Naive thymus-derived CD4-positive, alpha-beta T cell (primary cell): ENCODE measurements at regions of chr19 and their contacts with region 1.

Region 1: DNA sequence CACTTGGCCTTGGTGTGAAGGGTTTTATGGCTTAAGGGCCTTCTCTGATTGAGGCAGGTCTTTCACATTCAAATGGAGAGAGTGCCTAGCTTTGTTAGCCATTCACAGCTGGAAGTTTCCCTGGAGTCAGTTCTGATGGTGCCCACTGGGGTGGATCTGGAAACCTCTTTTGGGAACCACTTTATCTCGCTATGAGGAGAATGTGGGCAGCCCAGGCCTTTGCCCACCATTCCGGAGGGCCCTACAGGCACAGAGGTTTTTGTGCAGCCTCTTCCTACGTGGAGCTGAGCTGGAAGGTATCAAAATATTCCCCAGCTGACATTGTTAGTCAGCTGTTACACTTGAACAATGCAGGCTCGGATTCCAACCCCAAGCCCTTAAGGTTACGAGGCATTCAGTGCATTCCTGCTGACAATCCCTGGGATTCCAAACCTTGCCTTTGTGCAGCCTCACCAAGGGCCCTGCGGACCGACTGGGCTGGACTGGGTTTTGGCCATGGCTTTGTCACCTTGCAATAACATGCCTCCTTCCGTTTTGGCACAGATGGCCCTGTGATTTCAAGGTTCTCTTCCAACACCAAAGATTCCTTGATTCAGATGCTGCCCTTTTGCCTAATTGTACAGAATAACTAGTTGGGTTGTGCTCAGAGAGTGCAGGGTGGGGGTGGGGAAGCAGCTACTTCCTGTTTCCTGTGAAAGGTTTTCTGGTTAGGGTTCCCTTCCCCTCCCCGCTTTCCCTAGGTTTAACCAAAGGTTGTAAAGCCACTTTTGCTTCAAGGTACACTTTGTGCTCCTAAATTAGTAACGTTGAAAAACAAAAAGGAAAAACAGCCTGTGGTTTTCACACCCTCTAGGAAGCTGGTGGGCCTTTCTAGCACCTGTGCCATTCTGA is 27.0 kb downstream of the SAE1 start:
- DNase-seq: peak in 7 of 9 donors; percentile 38 to 58 (median 48)
- ATAC-seq: peak; percentile 45
- H3K4me3 ChIP-seq: peak overlapping the region; percentile 55
- H3K4me3 Mint-ChIP-seq: peak overlapping the region; percentile 79 to 98 (median 84)
- H3K27ac ChIP-seq: peak overlapping the region; percentile 66
- H3K27ac Mint-ChIP-seq: peak overlapping the region; percentile 82 to 98 (median 97)
- H3K4me1 ChIP-seq: peaks cover 57 to 72% of the 10 kb centered on the region in 2 donors
- H3K4me1 Mint-ChIP-seq: peaks cover 35 to 82% (median 66%) of the 10 kb centered on the region in 7 donors
- H3K27me3 ChIP-seq: no peaks in the 10 kb centered on the region
- H3K27me3 Mint-ChIP-seq: no peaks in the 10 kb centered on the region

Region 2: GRCh38 chr19:47130591-47131227 is 27.0 kb before region 1 on chr19 and contains the start of gene SAE1:
- CTCF ChIA-PET with region 1: interaction called, 13 read pairs
- POLR2A ChIA-PET with region 1: interaction called, 7 read pairs
- intact Hi-C with region 1: no loop called
- DNase-seq: peak; percentile 84 to 97 (median 91)
- ATAC-seq: peak; percentile 94
- H3K4me3 ChIP-seq: peak within 1 kb of the TSS; percentile 98
- H3K4me3 Mint-ChIP-seq: peak within 1 kb of the TSS; percentile 92 to 100 (median 99)
- H3K27ac ChIP-seq: peak within 1 kb of the TSS; percentile 85
- H3K27ac Mint-ChIP-seq: peak within 1 kb of the TSS; percentile 87 to 97 (median 92)
- H3K4me1 ChIP-seq: peaks cover 11 to 25% of the 10 kb centered on the region in 2 donors
- H3K4me1 Mint-ChIP-seq: peaks cover 44 to 57% (median 52%) of the 10 kb centered on the region in 7 donors
- H3K27me3 ChIP-seq: no peaks in the 10 kb centered on the region
- H3K27me3 Mint-ChIP-seq: peaks cover 0 to 7% (median 0%) of the 10 kb centered on the region in 5 donors
- total RNA-seq, gene SAE1: 34.3 to 115 (median 46.4) TPM

Region 3: DNA sequence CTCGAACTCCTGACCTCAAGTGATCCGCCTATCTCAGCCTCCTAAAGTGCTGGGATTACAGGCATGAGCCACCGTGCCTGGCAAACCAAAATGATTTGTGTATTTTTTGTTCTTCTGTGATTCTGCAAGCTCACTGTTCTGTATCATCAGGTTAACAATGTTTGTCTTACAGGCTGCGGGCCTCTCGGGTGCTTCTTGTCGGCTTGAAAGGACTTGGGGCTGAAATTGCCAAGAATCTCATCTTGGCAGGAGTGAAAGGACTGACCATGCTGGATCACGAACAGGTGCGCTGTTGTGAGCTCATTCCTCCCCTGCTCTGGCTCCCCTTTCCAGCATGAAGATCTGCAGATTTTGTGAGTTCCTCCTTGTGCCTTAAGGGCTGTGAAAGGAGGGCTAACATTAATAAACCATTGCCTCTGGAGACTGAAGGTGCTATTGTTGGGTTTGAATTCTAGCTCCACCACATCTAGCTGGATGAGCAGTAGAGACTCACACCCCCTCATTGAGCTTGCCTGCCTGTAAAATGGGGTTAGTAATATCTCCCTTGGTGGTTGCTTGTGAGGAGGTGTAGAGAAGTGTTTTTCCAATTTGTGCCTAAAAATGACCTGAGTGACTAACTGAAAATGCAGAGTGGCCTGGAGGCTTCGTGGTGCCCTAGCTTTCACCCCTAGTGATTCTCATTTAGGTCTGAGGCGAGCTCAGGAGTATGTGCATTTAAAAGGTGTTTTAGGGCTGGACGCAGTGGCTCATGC is 14.2 kb before region 1 on chr19:
- CTCF ChIA-PET with region 1: interaction called, 19 read pairs
- POLR2A ChIA-PET with region 1: interaction called, 8 read pairs
- intact Hi-C with region 1: no loop called
- DNase-seq: no peak
- ATAC-seq: no peak
- H3K4me3 ChIP-seq: no peak overlapping the region
- H3K4me3 Mint-ChIP-seq: peak overlapping the region in 3 of 10 donors; percentile 9 to 45 (median 32)
- H3K27ac ChIP-seq: no peak overlapping the region
- H3K27ac Mint-ChIP-seq: peak overlapping the region in 4 of 9 donors; percentile 11 to 73 (median 42)
- H3K4me1 ChIP-seq: peaks cover 21 to 38% of the 10 kb centered on the region in 2 donors
- H3K4me1 Mint-ChIP-seq: peaks cover 29 to 75% (median 57%) of the 10 kb centered on the region in 7 donors
- H3K27me3 ChIP-seq: no peaks in the 10 kb centered on the region
- H3K27me3 Mint-ChIP-seq: no peaks in the 10 kb centered on the region

Region 4: DNA sequence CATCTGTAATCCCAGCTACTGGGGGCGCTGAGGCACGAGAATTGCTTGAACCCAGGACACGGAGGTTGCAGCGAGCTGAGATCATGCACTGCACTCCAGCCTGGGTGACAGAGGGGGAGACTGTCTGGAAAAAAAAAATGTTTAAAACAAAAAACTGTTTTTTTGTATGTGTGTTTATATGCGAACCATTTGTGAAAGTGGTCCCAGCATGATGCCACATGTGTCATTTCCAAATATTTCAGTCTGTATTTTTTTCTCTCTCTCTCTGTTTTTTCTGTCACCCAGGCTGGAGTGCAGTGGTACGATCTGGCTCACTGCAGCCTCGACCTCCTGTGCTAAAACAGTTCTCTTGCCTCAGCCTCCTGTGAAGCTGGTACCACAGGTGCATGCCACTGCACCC is 10.4 kb after region 1 on chr19:
- CTCF ChIA-PET with region 1: interaction called, 3 read pairs
- POLR2A ChIA-PET with region 1: interaction called, 14 read pairs
- intact Hi-C with region 1: no loop called
- DNase-seq: no peak
- ATAC-seq: no peak
- H3K4me3 ChIP-seq: no peak overlapping the region
- H3K4me3 Mint-ChIP-seq: no peak overlapping the region
- H3K27ac ChIP-seq: no peak overlapping the region
- H3K27ac Mint-ChIP-seq: peak overlapping the region in 4 of 9 donors; percentile 4 to 64 (median 35)
- H3K4me1 ChIP-seq: peaks cover 0 to 4% of the 10 kb centered on the region in 2 donors
- H3K4me1 Mint-ChIP-seq: peaks cover 7 to 64% (median 47%) of the 10 kb centered on the region in 7 donors
- H3K27me3 ChIP-seq: no peaks in the 10 kb centered on the region
- H3K27me3 Mint-ChIP-seq: no peaks in the 10 kb centered on the region

Region 5: DNA sequence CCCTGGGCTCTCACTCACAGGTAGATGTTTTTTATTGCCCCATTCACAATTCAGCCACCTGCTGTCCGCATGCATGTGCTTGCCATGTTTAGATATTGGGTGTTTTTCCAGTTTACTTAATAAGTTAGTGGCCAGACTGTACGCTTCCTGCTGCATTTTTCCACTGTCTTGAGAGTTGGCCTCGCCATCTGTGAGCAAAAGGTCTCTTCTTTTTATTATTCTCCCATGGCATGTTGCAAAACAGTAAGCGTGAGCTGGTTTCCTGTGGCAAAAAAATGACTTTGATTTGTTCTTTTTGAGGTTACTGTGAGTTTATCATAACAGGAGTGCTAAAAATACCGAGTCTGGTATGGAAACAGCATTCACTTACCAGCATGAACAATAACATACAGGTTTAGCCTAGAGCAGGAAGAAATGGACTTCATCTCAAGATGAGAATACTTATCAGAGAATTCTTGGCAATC is 19.0 kb after region 1 on chr19:
- CTCF ChIA-PET with region 1: interaction called, 14 read pairs
- POLR2A ChIA-PET with region 1: interaction called, 386 read pairs
- intact Hi-C with region 1: loop called (anchors 1 kb)
- DNase-seq: peak in 8 of 9 donors; percentile 44 to 83 (median 79)
- ATAC-seq: peak; percentile 90
- H3K4me3 ChIP-seq: peak overlapping the region; percentile 28
- H3K4me3 Mint-ChIP-seq: peak overlapping the region; percentile 73 to 89 (median 81)
- H3K27ac ChIP-seq: peak overlapping the region; percentile 58
- H3K27ac Mint-ChIP-seq: peak overlapping the region; percentile 87 to 98 (median 96)
- H3K4me1 ChIP-seq: peaks cover 40 to 55% of the 10 kb centered on the region in 2 donors
- H3K4me1 Mint-ChIP-seq: peaks cover 40 to 85% (median 76%) of the 10 kb centered on the region in 7 donors
- H3K27me3 ChIP-seq: no peaks in the 10 kb centered on the region
- H3K27me3 Mint-ChIP-seq: no peaks in the 10 kb centered on the region

Region 6: DNA sequence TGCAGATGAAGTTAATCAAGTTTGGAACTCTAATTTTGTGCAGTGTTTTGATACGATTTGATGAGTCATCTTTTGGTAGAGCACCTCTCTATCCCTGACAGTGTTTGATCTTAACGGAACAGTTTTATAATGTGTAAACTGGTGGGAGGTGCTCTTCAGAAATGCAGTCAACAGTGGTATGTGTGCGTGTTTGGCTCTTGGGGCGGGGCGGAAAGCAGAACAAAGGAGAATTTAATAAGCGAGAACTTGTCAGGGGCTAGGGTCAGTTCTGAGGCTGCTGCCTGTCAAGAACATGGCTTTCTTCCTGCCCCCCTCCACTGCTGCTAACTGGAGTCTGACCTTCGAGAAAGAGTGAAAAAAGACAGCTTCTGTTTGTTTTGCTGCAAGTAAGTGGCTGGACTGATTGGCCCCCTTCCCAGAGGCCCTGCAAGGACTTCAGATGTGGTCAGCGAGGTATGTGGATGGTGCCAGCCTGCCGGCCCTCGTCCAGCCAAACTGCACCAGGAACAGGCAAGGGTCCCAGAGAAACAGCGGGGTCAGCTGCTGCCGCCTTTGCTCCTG is 32.6 kb after region 1 on chr19:
- CTCF ChIA-PET with region 1: interaction called, 54 read pairs
- POLR2A ChIA-PET with region 1: interaction called, 386 read pairs
- intact Hi-C with region 1: loop called (anchors 1 kb)
- DNase-seq: peak in 8 of 9 donors; percentile 52 to 77 (median 64)
- ATAC-seq: peak; percentile 53
- H3K4me3 ChIP-seq: no peak overlapping the region
- H3K4me3 Mint-ChIP-seq: peak overlapping the region; percentile 48 to 83 (median 72)
- H3K27ac ChIP-seq: peak overlapping the region; percentile 25
- H3K27ac Mint-ChIP-seq: peak overlapping the region; percentile 72 to 98 (median 95)
- H3K4me1 ChIP-seq: peaks cover 37 to 77% of the 10 kb centered on the region in 2 donors
- H3K4me1 Mint-ChIP-seq: peaks cover 41 to 81% (median 71%) of the 10 kb centered on the region in 7 donors
- H3K27me3 ChIP-seq: no peaks in the 10 kb centered on the region
- H3K27me3 Mint-ChIP-seq: no peaks in the 10 kb centered on the region